Activated T-helper 1 cell treated with anti-CD3 and anti-CD28 coated beads, Interleukin-12 subunit alpha, Interleukin-12 subunit beta, Interleukin-2, Interleukin-4 antibody, amounts not matched to agents 30 ng/mL and 10 ng/mL and 1 ng/mL, durations not matched to agents 14 hours and 24 hours and 36 hours (primary cell): ENCODE measurements at regions of chr15 and their contacts with region 1.

Region 1: DNA sequence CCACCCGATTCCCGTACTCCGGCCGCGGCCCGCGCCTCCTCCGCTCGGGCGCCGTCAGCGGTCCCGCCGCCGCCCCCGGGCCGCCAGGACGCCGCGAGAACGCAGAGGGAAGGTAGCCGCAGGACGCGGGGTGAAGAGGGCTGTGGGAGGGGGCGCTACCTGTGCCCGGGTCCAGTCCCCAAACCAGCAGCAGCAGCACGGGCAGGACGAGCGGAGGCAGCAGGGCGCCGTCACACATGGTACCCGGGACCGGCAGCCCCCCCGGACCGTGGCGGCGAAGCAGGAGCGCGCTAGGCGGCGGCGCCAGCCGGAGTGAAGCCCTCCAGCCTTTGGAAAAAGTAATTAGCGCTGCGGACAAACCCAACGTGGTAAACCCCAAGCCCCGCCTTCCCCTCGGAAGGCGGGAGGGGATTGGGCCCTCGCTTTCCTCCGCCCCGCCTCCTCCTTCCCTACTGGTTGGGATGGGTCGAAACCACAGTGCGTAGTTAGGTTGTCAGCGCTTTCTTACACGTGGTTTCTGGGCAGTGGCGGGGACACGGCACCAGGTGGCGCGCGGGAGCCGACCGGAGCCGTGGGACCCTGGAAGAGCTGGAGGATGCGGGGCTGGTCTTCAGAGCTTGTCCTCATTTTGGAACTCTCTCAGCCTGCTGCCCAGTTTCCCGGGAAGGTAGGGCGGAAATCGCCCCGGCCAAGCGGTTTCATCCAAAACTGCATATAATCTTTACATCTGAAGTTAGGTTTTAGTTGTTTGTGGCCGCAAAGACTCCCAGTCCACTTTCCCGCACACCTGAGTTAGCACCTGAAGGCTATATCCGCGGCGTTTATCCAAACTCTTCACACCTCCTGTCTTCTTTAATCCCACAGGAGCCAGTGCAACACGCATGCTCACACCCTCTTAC is at the start of gene ADAMTS17:
- DNase-seq: peak; percentile 90
- H3K4me3 Mint-ChIP-seq: peak within 1 kb of the TSS; percentile 59
- H3K27ac Mint-ChIP-seq: no peak within 1 kb of the TSS
- H3K4me1 Mint-ChIP-seq: no peaks in the 10 kb centered on the region
- H3K27me3 Mint-ChIP-seq: peaks cover 40% of the 10 kb centered on the region
- total RNA-seq, gene ADAMTS17: 0.83 and 1.3 TPM in 2 replicates

Region 2: DNA sequence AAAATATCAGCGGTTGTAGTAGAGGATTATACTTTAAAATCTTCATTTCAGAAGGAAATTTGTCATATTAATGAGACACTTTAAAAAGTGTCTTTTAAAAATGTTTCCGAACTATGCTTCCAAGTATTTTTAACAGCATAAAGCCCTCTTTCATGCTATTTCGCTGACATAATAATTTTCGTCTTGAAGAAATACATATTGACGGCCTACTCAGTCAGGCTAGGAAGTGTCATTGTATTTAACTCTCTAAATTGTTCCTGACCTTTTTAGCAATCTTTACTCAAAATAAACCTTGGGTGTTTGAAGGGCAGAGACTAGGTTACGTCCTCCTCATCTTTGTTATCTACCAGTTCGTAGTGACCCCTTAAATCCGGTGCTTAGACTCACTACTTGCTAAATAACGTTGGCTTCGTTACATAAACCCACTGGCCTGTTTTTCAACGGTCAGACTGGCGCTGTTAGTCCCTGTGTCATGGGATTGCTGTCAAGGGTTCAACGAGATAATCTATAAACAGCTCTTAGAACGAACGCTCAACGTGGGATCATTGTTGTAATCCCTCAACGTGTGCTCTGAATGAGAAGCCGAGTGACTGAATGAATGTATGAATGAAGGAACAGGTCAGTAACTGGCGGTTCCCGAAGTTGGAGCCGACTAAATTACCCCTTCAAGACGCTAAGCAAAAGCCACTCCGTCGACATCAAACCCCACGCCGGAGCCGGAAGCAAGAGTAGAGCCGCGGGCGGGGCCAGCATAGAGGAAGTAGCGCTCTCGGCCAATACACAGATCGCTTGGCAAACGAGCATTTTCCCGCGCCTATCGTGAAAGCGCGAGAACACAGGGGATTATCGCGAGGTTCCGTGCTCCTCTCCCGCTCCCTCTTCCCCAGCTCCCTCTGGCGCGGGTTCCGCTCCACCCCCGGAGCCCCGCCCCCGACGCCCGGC is 1091.1 kb before region 1 on chr15:
- intact Hi-C with region 1: loop called (anchors 5 kb)
- DNase-seq: peak; percentile 96
- H3K4me3 Mint-ChIP-seq: peak overlapping the region; percentile 89
- H3K27ac Mint-ChIP-seq: peak overlapping the region; percentile 82
- H3K4me1 Mint-ChIP-seq: peaks cover 31% of the 10 kb centered on the region
- H3K27me3 Mint-ChIP-seq: no peaks in the 10 kb centered on the region

Region 3: DNA sequence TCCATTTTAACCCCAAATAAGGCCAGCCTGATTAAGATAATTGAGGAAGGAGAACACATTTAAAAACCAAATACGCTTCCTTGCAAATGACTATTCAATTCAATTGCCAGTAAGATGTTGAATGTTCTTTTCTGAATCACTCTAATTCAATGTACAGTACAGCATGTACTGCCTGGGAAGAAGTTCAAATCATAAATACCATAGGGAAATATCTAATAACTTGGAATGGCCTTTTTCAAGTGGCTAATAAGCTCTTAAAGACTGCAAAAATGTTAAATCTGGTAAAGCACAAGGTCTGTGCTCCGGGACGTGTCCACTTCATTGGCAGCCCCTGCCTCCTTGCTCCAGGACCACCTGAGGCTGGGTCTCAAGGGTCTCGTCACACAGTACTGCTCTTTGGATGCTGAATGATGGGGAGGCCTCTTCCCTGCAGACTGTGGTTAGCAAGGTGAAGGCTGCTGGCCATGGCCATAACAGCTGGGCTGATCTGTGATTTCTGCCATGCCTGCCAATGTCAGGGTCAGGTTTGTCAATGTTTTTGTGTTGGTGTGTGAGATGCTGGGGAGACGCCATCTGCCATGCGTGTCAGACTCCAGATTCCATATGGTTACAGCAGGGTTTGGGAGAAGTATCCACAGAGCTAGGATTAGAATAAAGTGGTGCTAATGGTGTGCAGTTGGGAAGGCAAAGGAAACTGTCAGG is 300.6 kb before region 1 on chr15:
- intact Hi-C with region 1: loop called (anchors 2 kb)
- DNase-seq: no peak
- H3K4me3 Mint-ChIP-seq: no peak overlapping the region
- H3K27ac Mint-ChIP-seq: no peak overlapping the region
- H3K4me1 Mint-ChIP-seq: peaks cover 22% of the 10 kb centered on the region
- H3K27me3 Mint-ChIP-seq: peaks cover 4% of the 10 kb centered on the region

Region 4: GRCh38 chr15:100111103-100112060 is 230.5 kb before region 1 on chr15:
- intact Hi-C with region 1: no loop called
- DNase-seq: peak; percentile 24
- H3K4me3 Mint-ChIP-seq: peak overlapping the region; percentile 28
- H3K27ac Mint-ChIP-seq: peak overlapping the region; percentile 93
- H3K4me1 Mint-ChIP-seq: peaks cover 30% of the 10 kb centered on the region
- H3K27me3 Mint-ChIP-seq: peaks cover 2% of the 10 kb centered on the region

Region 5: DNA sequence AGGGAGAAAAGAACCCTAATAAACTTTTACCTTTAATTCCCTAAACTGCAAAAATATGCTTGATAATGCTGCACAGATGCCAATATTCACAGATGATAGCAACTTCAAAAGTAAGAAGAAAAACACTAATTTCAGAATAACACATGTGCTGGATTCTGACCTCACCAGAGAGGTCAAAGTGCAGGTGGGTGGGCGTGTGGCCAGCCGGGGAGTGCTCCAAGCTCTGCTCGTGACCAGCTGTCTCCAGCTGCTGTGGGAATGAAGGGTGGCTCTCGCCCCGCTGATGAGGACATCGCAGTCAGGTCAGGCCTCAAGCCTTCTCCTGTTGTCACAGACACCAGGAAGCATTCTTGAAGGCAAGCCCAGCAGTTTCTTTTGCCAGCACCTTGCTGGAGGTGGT is 57.2 kb before region 1 on chr15:
- intact Hi-C with region 1: no loop called
- DNase-seq: no peak
- H3K4me3 Mint-ChIP-seq: no peak overlapping the region
- H3K27ac Mint-ChIP-seq: no peak overlapping the region
- H3K4me1 Mint-ChIP-seq: no peaks in the 10 kb centered on the region
- H3K27me3 Mint-ChIP-seq: peaks cover 2% of the 10 kb centered on the region

Region 6: GRCh38 chr15:100394736-100395440 is 53.0 kb after region 1 on chr15:
- intact Hi-C with region 1: no loop called
- DNase-seq: no peak
- H3K4me3 Mint-ChIP-seq: no peak overlapping the region
- H3K27ac Mint-ChIP-seq: no peak overlapping the region
- H3K4me1 Mint-ChIP-seq: no peaks in the 10 kb centered on the region
- H3K27me3 Mint-ChIP-seq: peaks cover 9% of the 10 kb centered on the region

Region 7: GRCh38 chr15:100572362-100572983 is 230.6 kb after region 1 on chr15:
- intact Hi-C with region 1: loop called (anchors 2 kb)
- DNase-seq: no peak
- H3K4me3 Mint-ChIP-seq: peak overlapping the region; percentile 74
- H3K27ac Mint-ChIP-seq: peak overlapping the region; percentile 81
- H3K4me1 Mint-ChIP-seq: peaks cover 69% of the 10 kb centered on the region
- H3K27me3 Mint-ChIP-seq: no peaks in the 10 kb centered on the region

Region 8: DNA sequence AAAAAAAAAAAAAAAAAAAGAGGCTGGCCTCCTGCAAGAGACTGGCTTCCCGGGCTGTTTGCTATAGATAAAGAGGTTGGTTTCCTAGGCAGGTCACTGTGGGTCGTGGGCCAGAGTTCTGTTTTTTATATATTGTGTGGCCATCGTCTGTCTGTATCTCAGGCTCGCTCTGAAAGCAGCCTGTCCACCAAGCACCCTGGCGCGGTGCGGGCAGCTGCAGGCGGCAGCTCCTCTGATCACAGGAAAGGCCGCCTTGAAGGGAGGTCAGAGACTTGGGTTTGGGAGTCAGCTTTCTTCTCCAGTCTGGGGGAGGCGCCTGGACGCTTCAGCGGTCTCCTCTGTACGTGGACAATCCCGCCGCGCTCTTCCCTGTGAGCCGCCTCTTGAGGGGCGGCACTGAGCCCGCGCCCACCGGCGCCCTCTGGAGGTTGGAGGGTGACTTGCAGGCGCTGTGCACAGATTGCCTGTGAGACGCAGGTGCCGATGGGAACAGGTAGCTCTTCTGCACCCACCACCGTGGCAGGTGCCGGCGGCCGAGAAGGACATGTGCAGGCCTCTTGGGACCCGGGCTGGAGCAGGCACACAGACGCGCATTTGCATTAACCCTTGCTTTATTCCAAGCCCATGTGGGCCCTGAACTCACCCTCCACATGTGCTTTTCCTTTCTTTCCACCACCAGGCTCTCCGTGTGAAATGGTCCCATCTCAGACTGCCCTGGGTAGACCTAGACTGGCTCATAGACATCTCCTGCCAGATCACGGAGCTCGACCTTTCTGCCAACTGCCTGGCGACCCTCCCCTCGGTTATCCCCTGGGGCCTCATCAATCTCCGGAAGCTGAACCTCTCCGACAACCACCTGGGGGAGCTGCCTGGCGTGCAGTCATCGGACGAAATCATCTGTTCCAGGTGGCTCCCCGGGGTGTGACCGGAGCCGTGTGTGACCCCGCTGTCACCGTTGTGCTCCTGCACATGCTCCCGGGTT is 666.5 kb after region 1 on chr15:
- intact Hi-C with region 1: loop called (anchors 2 kb)
- DNase-seq: peak; percentile 80
- H3K4me3 Mint-ChIP-seq: peak overlapping the region; percentile 89
- H3K27ac Mint-ChIP-seq: peak overlapping the region; percentile 18
- H3K4me1 Mint-ChIP-seq: peaks cover 19% of the 10 kb centered on the region
- H3K27me3 Mint-ChIP-seq: peaks cover 21% of the 10 kb centered on the region